Activated B cell treated with CpG ODN at 0.5 μM for 24 hours (primary cell): ENCODE measurements at regions of chr9 and their contacts with region 1.

Region 1: DNA sequence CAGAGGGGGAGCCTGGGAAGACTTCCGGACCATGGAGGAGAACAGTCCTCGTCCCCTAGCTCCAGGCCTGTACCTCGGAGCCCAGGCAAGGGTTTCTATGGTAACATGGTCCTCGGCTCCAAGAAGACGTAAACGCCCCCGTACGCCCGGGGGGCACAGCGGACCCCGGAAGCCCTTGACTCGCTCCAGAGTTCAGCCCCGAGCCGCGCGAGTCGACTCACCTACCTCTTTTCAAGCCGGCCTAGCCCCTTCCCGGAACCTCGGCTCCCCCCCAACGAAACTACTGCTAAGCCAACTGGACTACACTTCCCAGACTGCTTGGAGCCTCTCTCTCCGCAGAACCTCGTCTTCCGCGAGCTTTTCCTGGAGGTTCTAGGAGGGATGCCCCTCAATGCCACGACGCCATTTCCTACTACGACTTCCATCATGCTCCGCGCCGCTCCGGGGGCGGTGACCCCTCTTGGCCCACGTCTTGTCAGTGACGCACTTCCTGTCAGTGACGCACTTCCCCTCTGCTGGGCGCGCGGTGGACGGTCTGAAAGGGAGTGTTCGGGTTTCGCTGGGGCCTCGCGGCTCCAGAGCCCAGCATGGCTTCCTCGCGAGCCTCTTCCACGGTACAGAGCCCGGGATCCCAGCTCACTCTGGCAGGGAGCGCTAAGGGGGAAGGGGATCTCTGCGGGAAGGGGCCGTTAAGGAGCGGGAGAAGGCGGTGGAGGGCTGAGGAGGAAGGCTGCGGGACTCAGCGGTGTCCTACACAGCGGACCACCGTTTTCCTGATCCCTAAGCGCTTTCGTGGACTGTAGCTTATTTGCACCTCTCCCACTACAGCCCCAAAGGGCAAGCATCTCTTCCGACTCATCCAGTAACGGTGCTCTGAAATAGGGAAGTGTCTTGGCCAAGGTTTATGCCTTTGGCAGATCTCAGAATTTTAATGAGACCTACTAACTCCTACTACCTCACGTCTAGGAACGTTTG is at the starts of genes CDC26 and PRPF4:
- DNase-seq: peak; percentile 92
- ATAC-seq: peak; percentile 88
- H3K4me3 Mint-ChIP-seq: no peak within 1 kb of the TSS
- H3K27ac Mint-ChIP-seq: no peak within 1 kb of the TSS
- H3K4me1 Mint-ChIP-seq: peaks cover 9% of the 10 kb centered on the region
- H3K27me3 Mint-ChIP-seq: no peaks in the 10 kb centered on the region
- CTCF ChIP-seq: no peak
- total RNA-seq, gene CDC26: 30.4 and 31.7 TPM in 2 replicates
- total RNA-seq, gene PRPF4: 32.8 and 36.7 TPM in 2 replicates

Region 2: DNA sequence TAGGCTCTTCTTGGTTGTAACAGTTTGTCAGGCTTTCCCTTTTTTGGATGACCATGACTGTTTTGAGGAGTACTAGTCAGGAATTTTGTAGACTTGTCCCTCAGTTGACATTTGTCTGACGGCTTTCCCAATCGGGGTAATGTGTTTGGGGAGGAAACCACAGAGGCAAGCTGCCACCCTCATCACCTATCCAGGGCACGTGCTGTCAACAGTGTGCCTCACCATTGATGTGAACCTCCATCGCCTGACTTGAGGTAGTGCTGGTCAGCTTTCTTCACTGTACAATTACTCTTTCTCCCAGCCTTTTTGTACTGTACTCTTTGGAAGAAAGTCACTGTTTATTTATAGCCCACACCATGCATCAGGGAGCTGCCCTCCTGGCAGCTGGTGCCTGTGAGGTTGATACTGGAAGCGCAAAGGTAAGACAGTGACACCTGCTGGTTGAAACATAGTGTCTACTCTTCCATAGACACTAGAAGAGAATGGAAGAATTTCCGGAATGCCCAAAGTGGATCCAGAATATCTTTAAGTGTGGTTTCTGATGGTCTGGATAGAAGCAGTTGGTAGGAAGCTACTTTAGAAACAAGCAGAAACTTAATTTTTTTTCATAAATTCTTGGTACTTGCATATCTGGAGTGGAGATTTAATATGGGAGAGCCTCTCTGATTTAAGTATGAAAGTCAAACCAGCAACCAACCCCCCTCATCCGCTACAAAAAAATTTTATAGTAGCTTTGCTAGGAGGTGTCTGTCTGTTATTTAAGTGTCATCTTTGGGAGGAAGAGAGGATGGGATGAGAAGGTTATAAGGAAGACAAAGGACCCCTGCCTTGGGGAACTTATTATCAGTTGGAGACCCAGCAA is 455.6 kb before region 1 on chr9:
- CTCF ChIA-PET with region 1: no interaction called
- POLR2A ChIA-PET with region 1: no interaction called
- intact Hi-C with region 1: no loop called
- DNase-seq: no peak
- ATAC-seq: peak; percentile 69
- H3K4me3 Mint-ChIP-seq: no peak overlapping the region
- H3K27ac Mint-ChIP-seq: peak overlapping the region; percentile 7
- H3K4me1 Mint-ChIP-seq: peaks cover 23% of the 10 kb centered on the region
- H3K27me3 Mint-ChIP-seq: no peaks in the 10 kb centered on the region
- CTCF ChIP-seq: peak; percentile 83

Region 3: DNA sequence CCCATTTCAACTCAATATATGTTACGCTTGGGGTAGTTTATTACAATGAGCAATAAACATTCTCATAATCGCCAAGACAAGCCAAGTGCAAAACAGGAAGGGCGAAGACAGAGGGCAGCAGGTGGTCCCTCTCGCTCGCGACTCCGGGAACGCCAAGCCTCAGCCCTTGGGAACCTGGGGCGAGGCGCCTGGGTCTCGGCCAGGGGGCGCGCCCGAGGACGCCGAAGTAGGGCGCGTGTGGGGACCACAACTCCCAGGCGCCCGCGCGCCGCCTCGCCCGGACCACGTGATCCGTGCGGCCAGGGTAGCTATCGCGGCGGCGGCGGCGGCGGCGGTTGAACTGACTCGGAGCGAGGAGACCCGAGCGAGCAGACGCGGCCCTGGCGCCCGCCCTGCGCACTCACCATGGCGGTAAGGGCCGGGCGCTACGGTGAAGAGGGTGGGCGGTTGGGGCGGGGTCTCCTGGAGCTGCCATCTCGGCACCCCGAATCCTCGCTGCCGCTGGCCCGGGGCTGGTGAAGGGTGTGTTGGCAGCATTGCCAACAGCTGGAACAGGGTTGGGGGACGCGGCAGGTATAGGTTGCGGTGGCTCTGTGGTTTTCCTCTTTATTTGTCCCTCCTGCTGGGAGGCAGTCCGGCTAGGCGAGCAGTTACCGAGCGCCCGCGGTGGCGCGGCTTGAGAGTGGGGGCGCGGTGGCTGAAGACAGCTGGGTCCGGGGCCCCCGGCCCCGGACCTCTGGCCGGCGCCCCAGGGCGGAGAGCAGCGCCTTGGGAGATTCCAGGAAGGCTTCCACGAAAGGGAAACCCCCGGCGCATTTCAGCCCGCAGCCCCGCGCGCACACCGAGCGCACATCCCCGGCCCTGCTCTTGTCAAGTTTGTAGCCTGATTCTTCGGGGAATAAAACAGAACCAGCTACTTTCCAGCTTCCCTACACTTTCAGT is 124.5 kb before region 1 on chr9 and contains the start of gene SLC31A2:
- CTCF ChIA-PET with region 1: no interaction called
- POLR2A ChIA-PET with region 1: interaction called, 5 read pairs
- intact Hi-C with region 1: loop called (anchors 1 kb)
- DNase-seq: peak; percentile 80
- ATAC-seq: peak; percentile 94
- H3K4me3 Mint-ChIP-seq: peak within 1 kb of the TSS; percentile 84
- H3K27ac Mint-ChIP-seq: no peak within 1 kb of the TSS
- H3K4me1 Mint-ChIP-seq: peaks cover 13% of the 10 kb centered on the region
- H3K27me3 Mint-ChIP-seq: peaks cover 2% of the 10 kb centered on the region
- CTCF ChIP-seq: no peak
- total RNA-seq, gene SLC31A2: 0.93 and 1.1 TPM in 2 replicates

Region 4: DNA sequence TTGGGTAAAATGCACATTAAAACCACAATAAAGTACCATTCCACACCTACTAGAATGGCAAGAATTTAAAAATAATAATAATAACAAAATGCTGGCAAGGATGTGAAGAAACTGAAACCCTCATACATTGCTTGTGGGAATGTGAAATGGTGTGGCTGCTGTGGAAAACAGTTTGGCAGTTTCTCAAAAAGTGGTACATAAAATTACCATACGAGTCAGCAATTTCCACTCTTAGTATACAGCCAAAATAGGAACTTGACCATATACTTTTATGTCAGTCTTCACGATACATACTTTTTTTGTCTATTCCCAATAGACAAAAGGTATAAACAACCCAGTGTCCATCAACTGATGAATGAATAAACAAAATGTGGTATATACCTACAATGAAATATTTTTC is 70.0 kb before region 1 on chr9:
- CTCF ChIA-PET with region 1: no interaction called
- POLR2A ChIA-PET with region 1: no interaction called
- intact Hi-C with region 1: no loop called
- DNase-seq: no peak
- ATAC-seq: no peak
- H3K4me3 Mint-ChIP-seq: no peak overlapping the region
- H3K27ac Mint-ChIP-seq: no peak overlapping the region
- H3K4me1 Mint-ChIP-seq: peaks cover 5% of the 10 kb centered on the region
- H3K27me3 Mint-ChIP-seq: no peaks in the 10 kb centered on the region
- CTCF ChIP-seq: no peak

Region 5: DNA sequence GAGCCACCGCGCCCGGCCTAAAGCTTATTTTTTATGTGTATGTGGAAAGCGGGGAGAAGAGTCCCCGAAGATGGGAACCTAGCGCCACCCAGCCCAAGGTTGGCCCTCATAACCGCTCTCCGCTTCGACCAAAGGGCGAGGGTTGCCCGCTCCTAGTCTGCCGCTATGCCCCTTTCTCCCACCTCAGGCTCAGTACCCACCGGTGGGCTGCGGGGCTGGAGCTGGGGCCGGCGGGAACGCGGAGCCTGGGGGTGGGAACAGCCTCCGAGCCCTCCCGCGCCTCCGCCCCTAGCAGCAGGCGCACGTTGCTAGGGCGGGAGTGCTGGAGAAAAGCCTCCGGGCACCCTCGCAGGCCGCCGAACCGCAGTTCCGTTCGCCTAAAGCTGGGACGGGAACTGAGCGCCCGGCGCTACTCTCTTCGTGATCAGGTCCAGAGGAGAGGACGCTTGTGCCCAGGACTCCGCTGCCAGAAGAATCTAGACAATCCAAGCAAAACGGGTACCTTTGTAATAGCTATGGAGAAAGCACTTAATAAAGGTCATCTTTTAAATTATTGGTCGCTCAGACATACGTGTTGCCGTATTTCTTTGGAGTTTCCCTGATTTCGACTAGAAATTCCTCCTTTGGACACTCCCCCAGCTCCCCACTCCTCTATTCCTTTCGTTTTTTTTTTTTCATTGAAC is 64.7 kb after region 1 on chr9 and contains the start of gene WDR31:
- CTCF ChIA-PET with region 1: interaction called, 7 read pairs
- POLR2A ChIA-PET with region 1: interaction called, 11 read pairs
- intact Hi-C with region 1: loop called (anchors 1 kb)
- DNase-seq: peak; percentile 78
- ATAC-seq: peak; percentile 98
- H3K4me3 Mint-ChIP-seq: peak within 1 kb of the TSS; percentile 84
- H3K27ac Mint-ChIP-seq: peak within 1 kb of the TSS; percentile 74
- H3K4me1 Mint-ChIP-seq: peaks cover 11% of the 10 kb centered on the region
- H3K27me3 Mint-ChIP-seq: peaks cover 3% of the 10 kb centered on the region
- CTCF ChIP-seq: no peak
- total RNA-seq, gene WDR31: 0.73 and 1.6 TPM in 2 replicates

Region 6: GRCh38 chr9:113401027-113401792 is 125.8 kb after region 1 on chr9 and contains the start of gene ALAD:
- CTCF ChIA-PET with region 1: interaction called, 15 read pairs
- POLR2A ChIA-PET with region 1: interaction called, 14 read pairs
- intact Hi-C with region 1: loop called (anchors 1 kb)
- DNase-seq: peak; percentile 99
- ATAC-seq: peak; percentile 99
- H3K4me3 Mint-ChIP-seq: peak within 1 kb of the TSS; percentile 96
- H3K27ac Mint-ChIP-seq: peak within 1 kb of the TSS; percentile 87
- H3K4me1 Mint-ChIP-seq: peaks cover 17% of the 10 kb centered on the region
- H3K27me3 Mint-ChIP-seq: no peaks in the 10 kb centered on the region
- CTCF ChIP-seq: no peak
- total RNA-seq, gene ALAD: 24.0 and 24.3 TPM in 2 replicates

Region 7: GRCh38 chr9:113446323-113446740 is 170.9 kb after region 1 on chr9:
- CTCF ChIA-PET with region 1: interaction called, 15 read pairs
- POLR2A ChIA-PET with region 1: no interaction called
- intact Hi-C with region 1: loop called (anchors 2 kb)
- DNase-seq: no peak
- ATAC-seq: peak; percentile 31
- H3K4me3 Mint-ChIP-seq: no peak overlapping the region
- H3K27ac Mint-ChIP-seq: no peak overlapping the region
- H3K4me1 Mint-ChIP-seq: no peaks in the 10 kb centered on the region
- H3K27me3 Mint-ChIP-seq: no peaks in the 10 kb centered on the region
- CTCF ChIP-seq: no peak

Region 8: DNA sequence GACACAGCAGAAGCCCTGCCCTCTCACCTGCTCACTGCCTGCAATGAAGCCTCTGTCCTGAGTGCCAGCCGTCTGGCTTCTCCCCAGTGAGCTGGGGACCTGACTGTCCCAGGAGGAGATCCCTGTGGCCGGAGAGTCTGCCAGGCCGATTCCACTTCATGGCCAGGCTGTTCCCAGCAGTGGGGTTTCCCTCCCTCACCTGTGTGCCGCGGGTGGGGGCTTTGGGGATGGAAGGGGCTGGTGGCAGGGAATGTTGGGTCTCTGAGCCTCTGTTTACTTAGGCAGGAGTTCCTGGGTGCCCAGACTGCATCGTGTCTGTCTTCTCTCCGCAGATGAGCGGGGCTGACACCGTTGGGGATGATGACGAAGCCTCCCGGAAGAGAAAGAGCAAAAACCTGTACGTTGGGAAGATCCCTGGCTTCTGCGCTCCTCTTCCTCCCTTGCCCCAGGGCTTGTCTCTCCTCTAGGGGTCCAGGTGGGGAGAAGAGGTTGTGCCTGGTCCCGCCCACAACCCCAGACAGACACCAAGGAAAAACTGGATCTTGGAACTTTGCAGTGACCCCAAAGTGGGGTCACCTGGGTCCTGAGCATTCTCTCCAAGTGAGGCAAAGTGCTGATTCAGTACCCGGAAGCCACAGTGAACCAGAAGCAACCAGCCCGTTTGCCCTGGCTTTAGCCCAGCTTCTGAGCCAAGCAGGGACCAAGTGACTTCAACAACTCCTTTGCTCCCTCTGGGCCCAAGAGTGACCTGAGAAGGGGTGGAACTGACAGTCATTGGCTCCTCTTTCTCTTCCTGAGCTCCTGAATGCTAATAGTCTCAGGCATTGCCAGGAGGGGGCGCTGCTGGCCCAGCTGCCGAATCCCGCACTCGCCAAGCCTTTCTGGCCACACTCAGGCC is 315.8 kb after region 1 on chr9:
- CTCF ChIA-PET with region 1: interaction called, 13 read pairs
- POLR2A ChIA-PET with region 1: interaction called, 4 read pairs
- intact Hi-C with region 1: no loop called
- DNase-seq: peak; percentile 67
- ATAC-seq: peak; percentile 71
- H3K4me3 Mint-ChIP-seq: no peak overlapping the region
- H3K27ac Mint-ChIP-seq: no peak overlapping the region
- H3K4me1 Mint-ChIP-seq: peaks cover 14% of the 10 kb centered on the region
- H3K27me3 Mint-ChIP-seq: no peaks in the 10 kb centered on the region
- CTCF ChIP-seq: no peak

Region 9: GRCh38 chr9:113712023-113712422 is 436.6 kb after region 1 on chr9:
- CTCF ChIA-PET with region 1: no interaction called
- POLR2A ChIA-PET with region 1: no interaction called
- intact Hi-C with region 1: no loop called
- DNase-seq: no peak
- ATAC-seq: no peak
- H3K4me3 Mint-ChIP-seq: no peak overlapping the region
- H3K27ac Mint-ChIP-seq: no peak overlapping the region
- H3K4me1 Mint-ChIP-seq: no peaks in the 10 kb centered on the region
- H3K27me3 Mint-ChIP-seq: peaks cover 18% of the 10 kb centered on the region
- CTCF ChIP-seq: no peak